Activated B cell treated with CpG ODN at 0.5 μM for 24 hours (primary cell): ENCODE measurements at regions of chr3 and their contacts with region 1.

Region 1: GRCh38 chr3:52270252-52270754 is 8.1 kb downstream of the WDR82 start:
- DNase-seq: no peak
- ATAC-seq: no peak
- H3K4me3 Mint-ChIP-seq: peak overlapping the region; percentile 41
- H3K27ac Mint-ChIP-seq: peak overlapping the region; percentile 76
- H3K4me1 Mint-ChIP-seq: peaks cover 79% of the 10 kb centered on the region
- H3K27me3 Mint-ChIP-seq: no peaks in the 10 kb centered on the region
- CTCF ChIP-seq: no peak

Region 2: GRCh38 chr3:51718547-51719409 is 551.5 kb before region 1 on chr3:
- CTCF ChIA-PET with region 1: no interaction called
- POLR2A ChIA-PET with region 1: no interaction called
- intact Hi-C with region 1: no loop called
- DNase-seq: no peak
- ATAC-seq: peak; percentile 37
- H3K4me3 Mint-ChIP-seq: no peak overlapping the region
- H3K27ac Mint-ChIP-seq: no peak overlapping the region
- H3K4me1 Mint-ChIP-seq: peaks cover 9% of the 10 kb centered on the region
- H3K27me3 Mint-ChIP-seq: no peaks in the 10 kb centered on the region
- CTCF ChIP-seq: no peak

Region 3: DNA sequence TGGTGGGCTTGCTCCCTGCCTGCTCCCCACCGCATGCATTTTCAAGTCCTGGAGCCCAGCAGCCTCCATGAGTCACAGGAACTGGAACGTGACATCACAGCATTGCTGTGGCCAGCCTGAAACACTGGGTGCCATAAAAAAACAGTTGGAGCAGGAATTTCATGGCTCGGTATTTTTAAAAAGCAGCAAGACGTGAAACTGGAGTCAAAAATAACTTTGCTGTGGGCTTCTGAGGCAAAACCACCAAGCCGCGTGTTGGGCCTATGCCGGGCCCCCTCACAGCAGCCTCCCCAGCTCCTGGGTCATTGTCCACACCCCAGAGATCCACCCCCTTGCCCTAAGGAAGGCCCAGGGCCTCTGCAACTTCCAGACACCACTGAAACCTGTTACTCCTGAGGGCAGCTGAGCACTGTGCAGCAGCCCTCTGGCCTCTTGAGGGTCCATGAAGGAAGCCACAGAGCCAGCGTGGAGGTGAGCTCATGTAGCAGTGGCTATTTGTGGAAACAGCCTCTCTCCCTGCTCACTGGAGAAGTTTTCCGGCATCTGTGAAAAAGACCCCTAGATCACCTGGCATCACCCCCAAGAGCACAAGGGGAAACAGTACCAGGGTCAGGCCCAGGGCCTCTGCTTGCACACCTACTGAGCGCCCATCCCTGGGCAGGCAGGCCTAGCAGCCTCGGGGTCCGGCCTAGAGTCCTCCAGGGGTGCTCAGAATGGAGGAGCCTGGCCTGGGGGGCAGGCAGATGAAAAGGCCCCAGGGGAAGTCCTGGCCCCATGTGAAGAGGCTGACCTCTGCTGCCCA is 180.0 kb before region 1 on chr3:
- CTCF ChIA-PET with region 1: no interaction called
- POLR2A ChIA-PET with region 1: no interaction called
- intact Hi-C with region 1: no loop called
- DNase-seq: no peak
- ATAC-seq: no peak
- H3K4me3 Mint-ChIP-seq: no peak overlapping the region
- H3K27ac Mint-ChIP-seq: no peak overlapping the region
- H3K4me1 Mint-ChIP-seq: peaks cover 8% of the 10 kb centered on the region
- H3K27me3 Mint-ChIP-seq: no peaks in the 10 kb centered on the region
- CTCF ChIP-seq: no peak

Region 4: GRCh38 chr3:52238761-52239701 is 31.3 kb before region 1 on chr3 and contains the start of gene TWF2:
- CTCF ChIA-PET with region 1: interaction called, 5 read pairs
- POLR2A ChIA-PET with region 1: interaction called, 111 read pairs
- intact Hi-C with region 1: no loop called
- DNase-seq: peak; percentile 94
- ATAC-seq: peak; percentile 86
- H3K4me3 Mint-ChIP-seq: peak within 1 kb of the TSS; percentile 96
- H3K27ac Mint-ChIP-seq: peak within 1 kb of the TSS; percentile 93
- H3K4me1 Mint-ChIP-seq: peaks cover 72% of the 10 kb centered on the region
- H3K27me3 Mint-ChIP-seq: no peaks in the 10 kb centered on the region
- CTCF ChIP-seq: no peak
- total RNA-seq, gene TWF2: 74.1 and 76.7 TPM in 2 replicates

Region 5: DNA sequence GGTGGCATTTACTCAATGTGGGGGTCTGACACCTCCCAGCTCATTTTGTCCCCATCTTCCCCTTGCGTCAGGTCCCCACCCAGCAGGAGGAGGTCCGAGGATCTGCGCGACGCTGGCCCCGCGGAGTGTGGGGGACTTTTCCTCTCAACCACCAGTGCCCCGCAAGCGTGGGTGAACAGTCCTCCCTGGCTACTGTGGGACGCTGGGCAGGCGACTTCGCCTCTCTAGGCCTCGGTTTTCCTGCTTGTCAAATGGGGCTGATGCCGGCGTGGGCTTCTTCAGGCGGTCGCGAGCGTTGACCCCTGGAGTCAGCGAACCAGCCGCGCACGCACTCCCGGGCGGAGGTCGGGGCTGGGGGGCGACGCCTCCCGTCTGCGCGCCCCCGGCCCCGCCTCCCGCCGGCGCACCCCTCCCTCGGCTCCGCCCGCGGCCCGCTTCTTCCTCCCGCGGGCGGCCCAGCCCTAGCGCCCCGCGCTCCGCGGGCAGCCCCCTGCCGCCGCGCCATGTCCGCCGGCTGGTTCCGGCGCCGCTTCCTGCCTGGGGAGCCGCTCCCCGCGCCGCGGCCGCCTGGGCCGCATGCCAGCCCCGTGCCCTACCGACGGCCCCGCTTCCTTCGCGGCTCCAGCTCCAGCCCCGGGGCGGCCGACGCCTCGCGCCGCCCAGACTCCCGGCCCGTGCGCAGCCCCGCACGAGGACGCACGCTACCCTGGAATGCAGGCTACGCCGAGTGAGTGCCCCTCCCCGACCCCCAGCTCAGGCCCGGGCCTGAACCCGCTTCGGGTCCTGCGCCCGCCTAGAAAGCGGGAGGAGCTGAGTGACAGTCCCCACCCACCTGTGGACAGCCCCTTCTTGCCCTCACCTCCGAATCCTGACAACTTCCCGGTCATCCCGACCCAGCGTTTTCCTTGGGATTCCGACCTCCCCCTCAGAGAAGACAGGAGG is 24.7 kb before region 1 on chr3 and contains the start of gene PPM1M:
- CTCF ChIA-PET with region 1: interaction called, 5 read pairs
- POLR2A ChIA-PET with region 1: interaction called, 111 read pairs
- intact Hi-C with region 1: no loop called
- DNase-seq: peak; percentile 61
- ATAC-seq: peak; percentile 44
- H3K4me3 Mint-ChIP-seq: peak within 1 kb of the TSS; percentile 84
- H3K27ac Mint-ChIP-seq: peak within 1 kb of the TSS; percentile 95
- H3K4me1 Mint-ChIP-seq: peaks cover 61% of the 10 kb centered on the region
- H3K27me3 Mint-ChIP-seq: no peaks in the 10 kb centered on the region
- CTCF ChIP-seq: no peak
- total RNA-seq, gene PPM1M: 44.4 and 44.6 TPM in 2 replicates